Ovary (tissue), 10 donors: ENCODE measurements at regions of chr6 and their contacts with region 1.

Region 1: DNA sequence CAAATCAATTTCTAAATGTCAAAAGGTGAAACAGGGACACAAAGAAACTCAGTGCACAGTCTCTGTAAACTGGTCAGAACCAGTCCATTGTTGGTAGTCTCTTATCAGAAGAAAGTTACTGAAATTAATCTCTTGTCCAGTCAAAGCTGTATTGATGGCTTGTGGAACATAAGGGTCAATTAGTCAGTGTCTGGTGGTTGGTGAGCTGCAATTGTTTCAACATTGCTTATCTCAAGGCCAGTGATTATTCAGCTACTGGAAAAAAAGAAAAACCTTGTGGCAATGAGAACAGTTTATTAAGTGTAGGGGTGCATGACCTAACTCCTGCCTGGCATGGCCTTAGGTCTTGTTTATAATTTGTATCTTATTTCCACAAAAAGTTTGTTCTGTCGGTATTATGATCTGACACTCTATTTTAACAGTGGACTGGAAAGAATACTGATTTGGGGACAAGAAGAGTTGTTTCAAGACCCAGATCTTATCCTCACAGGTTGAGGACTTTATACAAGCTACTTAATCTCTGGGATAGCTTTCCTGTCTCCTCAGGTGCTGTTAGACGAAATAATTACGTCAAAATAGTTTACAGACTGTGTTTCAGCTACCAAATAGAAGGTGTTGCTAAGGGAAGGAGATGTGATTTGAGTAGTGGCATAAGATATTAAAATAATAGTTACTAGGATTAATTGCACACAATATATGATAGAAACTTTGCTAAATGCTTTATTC is 520.0 kb upstream of the IRAK1BP1 start:
- DNase-seq: no peak
- H3K4me3 ChIP-seq: no peak overlapping the region
- H3K27ac ChIP-seq: no peak overlapping the region
- H3K4me1 ChIP-seq: no peaks in the 10 kb centered on the region
- H3K27me3 ChIP-seq: no peaks in the 10 kb centered on the region
- CTCF ChIP-seq: no peak
- EP300 ChIP-seq: no peak
- POLR2A ChIP-seq: no peak

Region 2: DNA sequence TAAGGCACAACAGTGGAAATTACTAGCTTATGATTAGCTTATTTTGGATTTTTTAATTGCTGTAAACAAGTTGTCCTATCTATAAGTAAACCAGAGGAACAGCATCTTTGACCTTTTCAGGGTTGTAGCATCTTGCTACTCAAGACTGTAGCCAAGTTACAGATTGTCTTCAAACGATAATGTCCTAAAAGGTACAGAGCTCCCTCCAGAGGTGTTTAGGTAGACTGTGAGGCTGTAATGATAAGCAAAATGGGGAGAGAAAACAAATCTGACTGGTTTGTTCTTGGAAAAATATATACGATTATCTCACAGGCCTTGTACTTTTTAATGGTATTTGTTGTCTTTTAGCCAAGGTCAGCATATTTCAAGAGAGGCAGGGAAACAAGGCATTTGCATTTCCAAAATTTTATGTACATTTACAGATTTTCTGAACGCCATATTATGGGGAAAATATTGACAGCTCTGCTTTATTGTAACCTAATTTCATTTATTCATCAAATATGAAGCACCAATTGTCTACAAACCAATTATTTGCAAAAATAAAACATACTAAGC is 421.1 kb before region 1 on chr6:
- intact Hi-C with region 1: loop called in 1 of 4 experiments (anchors 10 kb)
- DNase-seq: no peak
- H3K4me3 ChIP-seq: no peak overlapping the region
- H3K27ac ChIP-seq: no peak overlapping the region
- H3K4me1 ChIP-seq: no peaks in the 10 kb centered on the region
- H3K27me3 ChIP-seq: no peaks in the 10 kb centered on the region
- CTCF ChIP-seq: no peak
- EP300 ChIP-seq: no peak
- POLR2A ChIP-seq: no peak

Region 3: GRCh38 chr6:79307321-79308036 is 960.1 kb after region 1 on chr6:
- intact Hi-C with region 1: no loop called
- DNase-seq: no peak
- H3K4me3 ChIP-seq: no peak overlapping the region
- H3K27ac ChIP-seq: no peak overlapping the region
- H3K4me1 ChIP-seq: no peaks in the 10 kb centered on the region
- H3K27me3 ChIP-seq: no peaks in the 10 kb centered on the region
- CTCF ChIP-seq: no peak
- EP300 ChIP-seq: no peak
- POLR2A ChIP-seq: no peak

Region 4: DNA sequence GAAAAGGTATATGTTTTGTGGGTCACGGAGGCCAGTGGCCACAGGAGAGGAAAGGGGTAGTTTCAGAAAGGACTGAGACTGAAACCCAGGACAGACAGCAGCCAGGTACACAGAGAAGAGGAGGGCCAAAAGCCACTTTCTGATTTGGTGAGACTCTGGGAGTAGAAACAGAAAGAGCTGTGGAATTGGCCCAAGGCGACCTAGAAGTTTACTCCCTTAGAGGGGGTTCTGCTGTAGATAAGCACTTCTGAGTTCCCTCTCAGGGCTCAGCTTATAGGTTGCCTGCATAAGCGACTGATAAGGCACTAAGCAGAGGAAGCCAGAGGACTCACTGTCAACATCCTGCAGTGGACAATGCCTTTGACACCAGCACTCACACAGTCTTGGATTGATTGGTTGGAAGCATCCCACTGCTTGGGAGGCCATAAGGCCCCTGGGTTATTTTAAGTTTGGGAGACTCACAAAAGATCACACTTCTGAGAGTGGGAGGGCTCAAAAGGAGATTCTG is 1267.5 kb after region 1 on chr6:
- intact Hi-C with region 1: no loop called
- DNase-seq: no peak
- H3K4me3 ChIP-seq: no peak overlapping the region
- H3K27ac ChIP-seq: no peak overlapping the region
- H3K4me1 ChIP-seq: no peaks in the 10 kb centered on the region
- H3K27me3 ChIP-seq: no peaks in the 10 kb centered on the region
- CTCF ChIP-seq: no peak
- EP300 ChIP-seq: no peak
- POLR2A ChIP-seq: no peak